Sciatic nerve (tissue), 2 donors: ENCODE measurements at regions of chr5 and their contacts with region 1.

Region 1: GRCh38 chr5:139517683-139518564 is 35.4 kb upstream of the STING1 start:
- DNase-seq: peak; percentile 96
- ATAC-seq: peak; percentile 95

Region 2: DNA sequence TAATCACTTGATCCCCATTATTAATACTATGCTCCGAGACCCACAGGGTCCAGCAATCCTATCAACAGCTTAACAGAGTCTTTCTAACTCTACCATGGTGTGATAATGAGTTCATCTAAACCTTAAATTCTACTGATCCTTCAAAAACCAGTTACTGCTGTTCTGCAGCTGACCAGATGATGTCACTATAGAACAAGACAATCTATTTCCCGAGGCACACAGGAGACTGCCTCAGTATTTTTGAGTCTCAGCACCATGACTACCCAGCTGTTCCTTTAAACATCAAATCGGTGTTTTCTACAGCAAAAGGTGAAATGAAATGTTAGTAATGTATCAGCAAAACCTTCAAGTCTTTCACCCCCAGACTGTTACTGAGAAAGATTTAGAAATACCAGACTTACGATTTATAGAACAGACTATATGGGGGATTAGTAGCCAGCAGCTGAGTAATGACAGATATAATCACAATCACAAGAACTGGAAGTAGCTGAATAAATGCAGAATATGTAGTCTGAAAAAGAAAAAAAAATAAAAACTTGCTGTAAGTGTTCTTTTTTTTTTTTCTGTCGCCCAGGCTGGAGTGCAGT is 95.5 kb before region 1 on chr5:
- intact Hi-C with region 1: loop called (anchors 10 kb)
- DNase-seq: no peak
- ATAC-seq: peak; percentile 85

Region 3: DNA sequence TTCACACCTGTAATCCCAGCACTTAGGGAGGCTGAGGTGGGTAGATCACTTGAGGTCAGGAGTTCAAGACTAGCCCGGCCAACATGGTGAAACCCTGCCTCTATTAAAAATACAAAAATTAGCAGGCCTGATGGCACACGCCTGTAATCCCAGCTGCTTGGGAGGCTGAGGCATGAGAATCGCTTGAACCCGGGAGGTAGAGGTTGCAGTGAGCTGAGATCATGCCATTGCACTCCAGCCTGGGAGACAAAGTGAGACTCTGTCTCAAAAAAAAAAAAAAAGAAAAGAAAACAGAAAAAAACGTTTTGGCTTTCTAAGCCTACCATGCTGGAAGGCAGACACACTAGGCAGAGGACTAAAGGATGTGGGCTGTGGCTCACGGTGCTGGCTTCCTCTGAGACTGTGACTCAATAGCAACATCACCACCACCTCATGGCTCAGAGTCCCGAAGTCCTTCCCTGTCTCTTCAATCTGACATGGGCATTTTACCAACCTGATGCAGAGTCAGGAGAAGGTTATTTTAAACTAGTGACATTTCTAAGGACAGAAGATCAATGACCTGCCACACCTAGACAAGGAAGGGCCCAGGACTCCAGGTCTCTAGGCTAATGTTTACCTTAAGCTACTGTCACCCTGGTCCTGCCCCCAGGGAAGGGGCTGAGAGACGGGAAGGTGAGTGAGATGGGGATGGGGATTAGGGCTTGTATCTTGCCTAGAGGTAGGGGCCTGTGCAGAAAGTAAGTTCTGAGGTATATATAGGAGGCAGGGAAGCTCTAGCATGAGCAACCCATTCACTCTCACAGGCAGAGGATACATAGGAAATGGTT is 59.1 kb before region 1 on chr5:
- intact Hi-C with region 1: no loop called
- DNase-seq: no peak
- ATAC-seq: no peak

Region 4: GRCh38 chr5:139828207-139828895 is 310.4 kb after region 1 on chr5:
- intact Hi-C with region 1: no loop called
- DNase-seq: no peak
- ATAC-seq: no peak